Activated naive CD4-positive, alpha-beta T cell treated with anti-CD3 and anti-CD28 coated beads for 36 hours (primary cell): ENCODE measurements at regions of chrX and their contacts with region 1.

Region 1: GRCh38 chrX:78029663-78030062 is 60.2 kb upstream of the PGAM4 start:
- DNase-seq: peak; percentile 30
- H3K4me3 Mint-ChIP-seq: no peak overlapping the region
- H3K27ac Mint-ChIP-seq: no peak overlapping the region
- H3K4me1 Mint-ChIP-seq: peaks cover under 1% of the 10 kb centered on the region
- H3K27me3 Mint-ChIP-seq: no peaks in the 10 kb centered on the region

Region 2: GRCh38 chrX:76555814-76556213 is 1473.8 kb before region 1 on chrX:
- CTCF ChIA-PET with region 1: no interaction called
- intact Hi-C with region 1: loop called (anchors 10 kb)
- DNase-seq: peak; percentile 28
- H3K4me3 Mint-ChIP-seq: no peak overlapping the region
- H3K27ac Mint-ChIP-seq: no peak overlapping the region
- H3K4me1 Mint-ChIP-seq: no peaks in the 10 kb centered on the region
- H3K27me3 Mint-ChIP-seq: no peaks in the 10 kb centered on the region

Region 3: DNA sequence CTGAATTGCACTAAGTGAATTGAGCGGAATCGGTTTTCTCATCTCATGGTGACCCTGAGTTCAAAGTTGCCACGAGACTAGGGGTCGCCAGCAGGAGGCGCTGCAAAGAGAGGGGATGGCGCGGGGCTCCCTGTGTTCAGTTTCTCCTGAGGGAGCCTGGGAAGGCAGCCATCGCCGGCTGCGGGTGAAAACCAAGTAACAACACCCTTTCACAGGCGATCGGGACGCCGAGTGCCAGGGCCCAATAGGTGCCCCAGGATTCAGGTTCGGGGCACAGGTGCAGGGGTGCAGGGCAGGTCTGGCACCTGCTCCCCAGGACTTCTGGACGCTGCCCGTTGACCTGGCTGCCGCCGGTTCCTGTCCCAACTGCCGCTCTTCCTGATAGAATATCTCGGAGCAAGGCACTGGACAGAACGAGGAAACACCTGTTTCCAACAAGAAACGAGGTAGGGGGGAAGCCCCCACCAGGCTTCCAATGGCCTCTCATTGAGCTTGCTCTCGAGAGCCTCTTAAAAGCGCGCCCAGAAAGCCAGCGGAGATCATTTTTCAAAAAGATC is 583.6 kb before region 1 on chrX:
- CTCF ChIA-PET with region 1: interaction called, 3 read pairs
- intact Hi-C with region 1: loop called (anchors 10 kb)
- DNase-seq: peak; percentile 48
- H3K4me3 Mint-ChIP-seq: peak overlapping the region; percentile 72
- H3K27ac Mint-ChIP-seq: no peak overlapping the region
- H3K4me1 Mint-ChIP-seq: peaks cover 3% of the 10 kb centered on the region
- H3K27me3 Mint-ChIP-seq: peaks cover 14% of the 10 kb centered on the region